ENCODE measurements at regions of chr13 and their contacts with region 1.

Region 1: GRCh38 chr13:45119991-45120864 is at the start of gene GTF2F2:
- DNase-seq: peak; percentile 89 to 94
- ATAC-seq: peak; percentile 93 to 98 (median 96)
- H3K4me3 ChIP-seq: peak within 1 kb of the TSS; percentile 87
- H3K27ac ChIP-seq: peak within 1 kb of the TSS; percentile 82
- H3K4me1 ChIP-seq: peaks cover 12% of the 10 kb centered on the region
- H3K27me3 ChIP-seq: no peaks in the 10 kb centered on the region
- CTCF ChIP-seq: no peak
- total RNA-seq, gene GTF2F2: 12.9 to 23.2 (median 15.4) TPM

Region 2: GRCh38 chr13:45082964-45083363 is 37.3 kb before region 1 on chr13:
- intact Hi-C with region 1: no loop called
- DNase-seq: no peak
- ATAC-seq: no peak
- H3K4me3 ChIP-seq: no peak overlapping the region
- H3K27ac ChIP-seq: no peak overlapping the region
- H3K4me1 ChIP-seq: peaks cover 4% of the 10 kb centered on the region
- H3K27me3 ChIP-seq: no peaks in the 10 kb centered on the region
- CTCF ChIP-seq: no peak

Region 3: DNA sequence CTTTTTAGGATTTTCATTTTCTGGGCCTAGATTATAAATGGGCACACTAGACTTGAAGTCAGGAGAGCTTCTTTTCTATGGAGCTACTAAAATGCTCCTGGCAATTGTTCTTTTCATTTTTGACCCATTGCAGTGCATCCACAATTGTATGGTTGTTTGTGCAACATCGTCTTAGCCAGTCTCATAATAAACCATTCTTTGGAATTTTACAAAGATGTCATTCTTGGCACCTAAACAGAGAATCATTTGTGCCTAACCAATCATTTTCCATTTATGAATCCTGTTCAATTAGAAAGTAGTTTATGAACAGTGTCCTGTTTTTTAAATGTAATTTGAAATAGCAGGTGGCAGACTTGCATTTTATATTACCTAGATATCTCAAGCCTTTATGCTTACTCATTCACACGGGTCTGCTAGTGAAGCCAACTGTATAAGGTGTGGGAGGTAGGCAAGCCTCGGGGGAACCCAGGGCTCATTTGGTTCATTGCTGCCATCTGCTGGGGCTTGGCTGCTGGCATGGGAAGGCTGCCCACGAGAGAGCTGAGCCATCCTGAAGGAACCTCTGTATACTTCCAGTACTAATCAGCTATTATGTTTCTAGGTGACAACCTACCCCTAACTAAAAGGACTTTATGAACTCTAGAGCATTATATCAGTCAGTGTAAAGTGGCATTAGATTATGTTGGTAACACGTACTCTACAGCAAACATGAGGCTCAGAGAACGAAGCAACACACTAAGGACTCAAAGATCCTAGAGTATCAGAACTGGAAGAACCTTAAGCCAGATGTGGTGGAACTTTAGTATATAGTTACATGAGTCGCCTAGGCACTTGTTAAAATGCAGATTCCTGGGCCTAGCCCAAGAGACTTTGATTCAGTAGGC is 160.8 kb after region 1 on chr13:
- intact Hi-C with region 1: loop called in 1 of 2 experiments (anchors 5 kb)
- DNase-seq: peak; percentile 45 to 81
- ATAC-seq: peak; percentile 97 to 99 (median 99)
- H3K4me3 ChIP-seq: no peak overlapping the region
- H3K27ac ChIP-seq: no peak overlapping the region
- H3K4me1 ChIP-seq: peaks cover 6% of the 10 kb centered on the region
- H3K27me3 ChIP-seq: no peaks in the 10 kb centered on the region
- CTCF ChIP-seq: peak; percentile 76

Region 4: DNA sequence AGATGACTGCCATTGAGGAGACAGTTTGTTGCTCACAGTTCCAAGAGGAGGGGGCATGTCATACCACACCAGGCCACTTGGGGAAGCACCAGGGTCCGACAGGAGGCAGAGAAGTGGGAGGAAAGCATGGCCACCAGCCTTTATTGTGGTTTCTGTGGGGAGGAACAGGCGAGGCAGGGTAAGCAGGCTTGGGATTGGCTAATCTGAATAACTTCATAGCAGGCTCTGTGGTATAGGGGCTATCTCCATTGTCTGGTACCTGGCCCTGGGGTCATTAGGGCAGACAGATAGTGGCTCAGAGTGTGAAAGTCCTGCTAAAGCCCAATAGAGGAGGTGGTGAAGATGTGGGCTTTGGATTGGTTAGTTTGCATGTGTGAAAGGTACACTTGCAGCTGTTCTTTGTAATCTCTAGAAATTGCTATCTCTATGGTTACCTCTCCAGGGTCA is 617.4 kb after region 1 on chr13:
- intact Hi-C with region 1: no loop called
- DNase-seq: no peak
- ATAC-seq: no peak
- H3K4me3 ChIP-seq: no peak overlapping the region
- H3K27ac ChIP-seq: no peak overlapping the region
- H3K4me1 ChIP-seq: no peaks in the 10 kb centered on the region
- H3K27me3 ChIP-seq: no peaks in the 10 kb centered on the region
- CTCF ChIP-seq: no peak